MCF 10A (cell line): ENCODE measurements at regions of chr4 and their contacts with region 1.

Region 1: GRCh38 chr4:25320773-25321172 is 8.2 kb downstream of the ZCCHC4 start:
- DNase-seq: peak; percentile 65
- H3K4me3 Mint-ChIP-seq: no peak overlapping the region
- H3K27ac Mint-ChIP-seq: peak overlapping the region; percentile 8
- H3K4me1 Mint-ChIP-seq: peaks cover 11% of the 10 kb centered on the region
- H3K27me3 Mint-ChIP-seq: no peaks in the 10 kb centered on the region
- CTCF ChIP-seq: no peak

Region 2: DNA sequence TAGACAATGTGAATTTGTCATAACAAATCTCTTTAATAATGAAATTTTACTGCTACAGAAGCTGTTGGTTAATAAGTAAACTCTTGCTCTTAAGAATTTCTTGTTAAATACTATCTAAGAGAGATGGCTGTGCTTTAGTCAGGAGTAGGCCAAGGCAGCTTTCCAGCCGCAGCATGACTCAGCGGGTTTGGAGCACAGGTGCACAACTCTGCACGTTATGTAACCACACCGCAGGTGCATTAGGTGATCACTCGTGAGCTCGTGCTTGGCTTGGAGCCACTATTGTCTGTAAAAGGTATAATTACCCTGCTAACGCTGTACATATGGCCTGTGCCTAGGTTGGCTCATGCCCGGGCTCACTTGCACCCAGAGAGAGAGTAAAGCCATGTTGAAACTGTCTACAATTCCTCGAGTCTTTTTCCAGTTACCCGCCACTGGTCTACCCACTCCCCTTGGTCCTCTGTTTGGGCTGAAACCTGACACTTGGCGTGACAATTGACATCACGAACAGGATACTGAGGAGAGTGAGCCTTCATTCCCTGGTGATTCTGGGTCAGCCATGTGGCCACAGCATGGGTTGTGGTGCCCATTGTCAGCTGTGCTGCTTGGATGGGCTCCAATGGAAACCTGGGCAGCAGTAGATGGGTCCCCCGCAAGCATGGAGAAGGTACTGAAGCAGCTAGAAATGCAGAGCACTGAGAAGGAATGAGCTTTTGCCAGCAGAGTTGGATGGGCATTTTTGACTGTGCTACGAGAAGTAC is 37.9 kb after region 1 on chr4:
- CTCF ChIA-PET with region 1: interaction called, 4 read pairs
- POLR2A ChIA-PET with region 1: no interaction called
- intact Hi-C with region 1: loop called (anchors 2 kb)
- DNase-seq: peak; percentile 88
- H3K4me3 Mint-ChIP-seq: no peak overlapping the region
- H3K27ac Mint-ChIP-seq: no peak overlapping the region
- H3K4me1 Mint-ChIP-seq: no peaks in the 10 kb centered on the region
- H3K27me3 Mint-ChIP-seq: no peaks in the 10 kb centered on the region
- CTCF ChIP-seq: no peak

Region 3: GRCh38 chr4:25540734-25541133 is 220.0 kb after region 1 on chr4:
- CTCF ChIA-PET with region 1: no interaction called
- POLR2A ChIA-PET with region 1: no interaction called
- intact Hi-C with region 1: no loop called
- DNase-seq: no peak
- H3K4me3 Mint-ChIP-seq: no peak overlapping the region
- H3K27ac Mint-ChIP-seq: no peak overlapping the region
- H3K4me1 Mint-ChIP-seq: peaks cover 6% of the 10 kb centered on the region
- H3K27me3 Mint-ChIP-seq: no peaks in the 10 kb centered on the region
- CTCF ChIP-seq: no peak